A673 (cell line): ENCODE measurements at regions of chr2 and their contacts with region 1.

Region 1: DNA sequence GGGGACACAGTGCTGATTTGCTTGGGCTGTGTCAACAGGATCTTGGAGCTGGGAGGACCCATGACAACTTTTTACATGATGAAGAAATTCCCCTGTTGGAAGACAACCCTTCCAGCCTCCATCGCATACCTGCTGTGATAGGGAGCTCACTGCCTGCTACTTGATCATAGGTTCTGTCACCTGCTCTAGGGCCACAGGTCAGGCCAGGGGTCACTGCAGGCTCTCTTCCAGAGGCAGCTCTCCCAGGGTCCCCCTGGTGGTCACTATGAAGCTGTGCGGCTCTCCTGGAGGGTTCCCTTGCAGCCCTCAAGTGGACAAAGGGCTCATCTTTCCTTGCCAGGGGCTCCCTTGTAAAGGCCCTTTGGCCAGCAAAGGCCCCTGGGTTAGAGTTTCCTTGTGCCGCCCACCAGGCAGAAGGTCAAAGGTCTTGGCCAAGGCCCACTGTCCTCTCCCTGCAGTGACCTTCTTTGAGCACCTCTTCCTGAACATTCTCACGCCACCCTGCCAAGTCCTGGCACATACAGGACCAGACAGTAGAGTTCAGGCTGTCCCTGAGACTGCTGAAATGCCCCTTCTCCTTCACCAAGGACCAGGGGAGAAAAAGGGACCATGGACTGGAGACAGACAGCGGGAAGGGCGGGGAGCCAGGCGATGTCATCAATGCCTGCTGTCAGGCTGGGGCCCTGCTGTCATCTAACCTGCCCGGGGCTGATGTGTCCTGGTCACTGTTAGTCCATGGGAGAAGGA is 345.1 kb downstream of the DYSF start:
- DNase-seq: peak; percentile 34
- H3K4me3 ChIP-seq: no peak overlapping the region
- H3K27ac ChIP-seq: no peak overlapping the region
- H3K4me1 ChIP-seq: no peaks in the 10 kb centered on the region
- H3K27me3 ChIP-seq: no peaks in the 10 kb centered on the region
- CTCF ChIP-seq: peak; percentile 87

Region 2: GRCh38 chr2:71545572-71546274 is 252.7 kb before region 1 on chr2:
- CTCF ChIA-PET with region 1: interaction called, 3 read pairs
- POLR2A ChIA-PET with region 1: no interaction called
- intact Hi-C with region 1: loop called (anchors 5 kb)
- DNase-seq: peak; percentile 80
- H3K4me3 ChIP-seq: peak overlapping the region; percentile 25
- H3K27ac ChIP-seq: no peak overlapping the region
- H3K4me1 ChIP-seq: peaks cover 4% of the 10 kb centered on the region
- H3K27me3 ChIP-seq: no peaks in the 10 kb centered on the region
- CTCF ChIP-seq: peak; percentile 84

Region 3: GRCh38 chr2:71599646-71600236 is 198.7 kb before region 1 on chr2:
- CTCF ChIA-PET with region 1: no interaction called
- POLR2A ChIA-PET with region 1: no interaction called
- intact Hi-C with region 1: no loop called
- DNase-seq: no peak
- H3K4me3 ChIP-seq: no peak overlapping the region
- H3K27ac ChIP-seq: no peak overlapping the region
- H3K4me1 ChIP-seq: no peaks in the 10 kb centered on the region
- H3K27me3 ChIP-seq: no peaks in the 10 kb centered on the region
- CTCF ChIP-seq: no peak

Region 4: GRCh38 chr2:71609958-71610357 is 188.5 kb before region 1 on chr2:
- CTCF ChIA-PET with region 1: interaction called, 3 read pairs
- POLR2A ChIA-PET with region 1: no interaction called
- intact Hi-C with region 1: loop called (anchors 2 kb)
- DNase-seq: peak; percentile 68
- H3K4me3 ChIP-seq: no peak overlapping the region
- H3K27ac ChIP-seq: no peak overlapping the region
- H3K4me1 ChIP-seq: peaks cover 5% of the 10 kb centered on the region
- H3K27me3 ChIP-seq: no peaks in the 10 kb centered on the region
- CTCF ChIP-seq: peak; percentile 45; the same call in 1 of the 2 replicates

Region 5: GRCh38 chr2:71995067-71995665 is 196.7 kb after region 1 on chr2:
- CTCF ChIA-PET with region 1: no interaction called
- POLR2A ChIA-PET with region 1: no interaction called
- intact Hi-C with region 1: loop called (anchors 10 kb)
- DNase-seq: peak; percentile 58
- H3K4me3 ChIP-seq: no peak overlapping the region
- H3K27ac ChIP-seq: no peak overlapping the region
- H3K4me1 ChIP-seq: peaks cover 3% of the 10 kb centered on the region
- H3K27me3 ChIP-seq: no peaks in the 10 kb centered on the region
- CTCF ChIP-seq: peak; percentile 71

Region 6: GRCh38 chr2:72579591-72580180 is 781.2 kb after region 1 on chr2:
- CTCF ChIA-PET with region 1: no interaction called
- POLR2A ChIA-PET with region 1: no interaction called
- intact Hi-C with region 1: loop called (anchors 10 kb)
- DNase-seq: peak; percentile 81
- H3K4me3 ChIP-seq: no peak overlapping the region
- H3K27ac ChIP-seq: peak overlapping the region; percentile 10
- H3K4me1 ChIP-seq: peaks cover 48% of the 10 kb centered on the region
- H3K27me3 ChIP-seq: no peaks in the 10 kb centered on the region
- CTCF ChIP-seq: peak; percentile 73